ENCODE measurements at regions of chr3 and their contacts with region 1.

Region 1: DNA sequence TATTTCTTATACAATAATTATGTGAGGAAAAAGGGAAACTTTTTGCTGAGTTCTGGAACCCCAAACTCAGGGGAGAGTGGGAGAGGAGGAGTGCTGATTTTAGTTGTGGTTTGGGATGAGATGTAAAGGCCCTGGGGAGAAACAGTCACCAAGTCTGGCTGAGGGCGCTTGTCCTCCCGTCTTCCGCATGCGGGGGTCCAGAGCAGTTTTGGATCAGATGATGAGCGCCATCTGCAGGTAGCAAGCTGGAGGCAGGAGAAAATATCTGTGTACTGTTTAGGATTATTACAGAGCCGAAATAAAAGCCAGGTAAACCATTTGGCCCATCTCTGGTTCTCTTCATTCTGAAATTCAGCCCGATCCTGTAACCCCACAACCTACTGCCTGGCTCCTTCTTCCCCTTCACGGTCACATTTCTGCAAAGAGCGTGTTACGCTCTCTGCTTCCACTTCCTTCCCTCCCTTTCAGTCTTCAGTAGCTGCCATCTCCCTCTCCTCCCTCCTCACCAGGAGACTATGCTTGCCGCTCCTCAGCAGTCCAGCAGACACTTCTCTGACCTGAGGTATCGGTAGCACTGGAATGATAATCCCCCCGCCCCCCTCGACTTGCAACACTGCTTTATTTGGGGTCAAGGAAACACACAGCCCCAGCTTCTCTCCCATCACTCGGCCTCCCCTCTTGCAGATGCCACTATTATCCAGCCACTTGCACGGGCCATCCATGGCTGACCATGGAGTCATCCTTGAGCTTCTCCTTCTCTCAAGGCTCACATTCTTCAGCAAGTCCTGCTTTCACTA is 1.4 kb upstream of the PARP14 start:
- DNase-seq: peak; percentile 77
- H3K4me3 Mint-ChIP-seq: peak overlapping the region; percentile 95
- H3K27ac Mint-ChIP-seq: peak overlapping the region; percentile 97
- H3K4me1 Mint-ChIP-seq: peaks cover 54% of the 10 kb centered on the region
- H3K27me3 Mint-ChIP-seq: no peaks in the 10 kb centered on the region

Region 2: DNA sequence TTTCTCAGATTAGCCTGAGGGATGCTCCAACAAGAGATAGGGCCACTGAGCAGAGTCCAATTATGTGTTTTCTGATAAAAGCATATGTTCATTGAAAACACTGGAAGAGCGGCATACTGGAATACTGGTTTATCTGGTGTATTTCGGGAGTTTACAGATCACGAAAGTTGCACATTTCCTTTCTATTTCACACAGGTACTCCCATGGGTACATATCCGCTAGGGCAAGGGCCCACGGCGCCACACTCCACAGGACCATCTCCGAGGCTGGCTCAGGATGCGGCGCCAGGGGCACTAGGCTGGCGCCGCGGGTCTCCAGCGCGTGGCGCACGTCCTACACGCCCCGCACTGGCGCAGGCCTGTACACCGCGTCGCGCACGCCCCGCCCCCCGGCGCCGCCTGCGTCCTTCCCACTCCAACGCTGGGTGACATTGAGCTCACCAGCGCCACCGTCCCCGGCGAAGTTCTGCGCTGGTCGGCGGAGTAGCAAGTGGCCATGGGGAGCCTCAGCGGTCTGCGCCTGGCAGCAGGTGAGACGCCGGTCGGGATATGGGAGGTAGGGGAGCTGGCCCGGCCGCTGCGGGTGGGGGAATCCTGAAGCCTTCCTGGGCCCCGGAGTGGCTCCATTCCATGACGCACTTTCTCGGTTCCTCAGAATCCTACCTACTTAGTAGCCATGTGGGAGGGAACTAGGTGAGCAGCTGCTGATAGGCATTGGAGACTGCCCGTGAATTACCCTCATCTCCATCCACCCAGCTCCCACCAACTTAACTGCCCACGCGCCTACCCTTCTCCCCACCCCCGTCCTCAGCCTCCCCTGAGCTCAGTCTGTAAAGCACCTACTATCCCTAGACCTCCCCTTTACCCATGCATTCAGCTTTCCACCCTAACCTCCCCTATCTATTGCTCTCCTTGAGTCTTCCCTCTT is 295.2 kb before region 1 on chr3 and contains the start of gene FAM162A:
- intact Hi-C with region 1: loop called (anchors 2 kb)
- DNase-seq: peak; percentile 93
- H3K4me3 Mint-ChIP-seq: peak within 1 kb of the TSS; percentile 96
- H3K27ac Mint-ChIP-seq: peak within 1 kb of the TSS; percentile 90
- H3K4me1 Mint-ChIP-seq: peaks cover 81% of the 10 kb centered on the region
- H3K27me3 Mint-ChIP-seq: no peaks in the 10 kb centered on the region
- total RNA-seq, gene FAM162A: 63.7 and 70.0 TPM in 2 replicates

Region 3: DNA sequence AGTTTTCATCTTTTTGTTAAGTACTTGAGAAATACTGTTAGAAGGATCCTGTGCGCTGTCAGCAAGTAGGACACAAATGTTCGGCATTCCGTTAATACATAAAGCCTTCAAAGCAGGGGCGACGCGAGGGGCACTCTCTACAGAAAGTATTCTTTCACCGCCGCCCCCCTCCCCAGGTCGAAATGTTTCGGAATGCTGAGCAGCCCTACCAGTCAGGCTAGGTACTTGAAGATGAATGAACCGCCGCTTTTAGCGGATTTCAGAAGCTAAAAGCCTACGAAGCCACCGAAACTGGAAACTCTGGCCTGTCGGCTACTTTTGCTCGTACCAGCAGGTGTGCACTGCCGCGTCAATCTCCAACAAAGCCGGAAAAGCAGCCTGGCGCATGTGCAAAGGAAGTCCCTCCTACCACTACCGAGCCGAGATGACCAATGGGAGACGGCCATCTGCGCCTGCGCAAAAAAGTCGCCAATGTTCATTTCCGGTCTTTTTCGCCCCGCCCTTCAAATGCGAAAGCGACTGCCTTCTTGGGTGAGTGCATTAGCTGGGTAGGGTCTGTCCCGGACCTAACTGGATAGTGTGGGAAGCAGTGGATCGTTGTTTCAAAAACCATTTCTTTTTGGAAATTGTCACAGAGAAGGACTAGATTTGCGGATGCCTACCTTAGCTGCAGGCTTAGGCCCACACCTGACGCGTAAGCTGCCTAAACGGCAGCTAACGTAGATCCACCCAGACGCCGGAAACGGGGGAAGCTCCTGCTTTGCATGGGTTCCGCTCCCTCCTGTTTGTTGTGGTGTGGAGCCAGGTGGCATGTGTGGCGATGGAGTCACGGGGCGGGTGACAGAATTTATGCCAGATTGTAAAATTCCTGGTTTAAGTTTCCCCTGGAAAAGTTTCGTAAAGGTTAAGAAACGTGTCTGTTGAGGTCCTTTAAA is 263.3 kb before region 1 on chr3 and contains the start of gene WDR5B:
- intact Hi-C with region 1: loop called (anchors 1 kb)
- DNase-seq: peak; percentile 96
- H3K4me3 Mint-ChIP-seq: peak within 1 kb of the TSS; percentile 98
- H3K27ac Mint-ChIP-seq: peak within 1 kb of the TSS; percentile 99
- H3K4me1 Mint-ChIP-seq: peaks cover 48% of the 10 kb centered on the region
- H3K27me3 Mint-ChIP-seq: no peaks in the 10 kb centered on the region
- total RNA-seq, gene WDR5B: 4.3 and 5.6 TPM in 2 replicates

Region 4: GRCh38 chr3:122533931-122534334 is 145.3 kb before region 1 on chr3:
- intact Hi-C with region 1: loop called (anchors 1 kb)
- DNase-seq: peak; percentile 46
- H3K4me3 Mint-ChIP-seq: no peak overlapping the region
- H3K27ac Mint-ChIP-seq: peak overlapping the region; percentile 80
- H3K4me1 Mint-ChIP-seq: peaks cover 60% of the 10 kb centered on the region
- H3K27me3 Mint-ChIP-seq: no peaks in the 10 kb centered on the region

Region 5: DNA sequence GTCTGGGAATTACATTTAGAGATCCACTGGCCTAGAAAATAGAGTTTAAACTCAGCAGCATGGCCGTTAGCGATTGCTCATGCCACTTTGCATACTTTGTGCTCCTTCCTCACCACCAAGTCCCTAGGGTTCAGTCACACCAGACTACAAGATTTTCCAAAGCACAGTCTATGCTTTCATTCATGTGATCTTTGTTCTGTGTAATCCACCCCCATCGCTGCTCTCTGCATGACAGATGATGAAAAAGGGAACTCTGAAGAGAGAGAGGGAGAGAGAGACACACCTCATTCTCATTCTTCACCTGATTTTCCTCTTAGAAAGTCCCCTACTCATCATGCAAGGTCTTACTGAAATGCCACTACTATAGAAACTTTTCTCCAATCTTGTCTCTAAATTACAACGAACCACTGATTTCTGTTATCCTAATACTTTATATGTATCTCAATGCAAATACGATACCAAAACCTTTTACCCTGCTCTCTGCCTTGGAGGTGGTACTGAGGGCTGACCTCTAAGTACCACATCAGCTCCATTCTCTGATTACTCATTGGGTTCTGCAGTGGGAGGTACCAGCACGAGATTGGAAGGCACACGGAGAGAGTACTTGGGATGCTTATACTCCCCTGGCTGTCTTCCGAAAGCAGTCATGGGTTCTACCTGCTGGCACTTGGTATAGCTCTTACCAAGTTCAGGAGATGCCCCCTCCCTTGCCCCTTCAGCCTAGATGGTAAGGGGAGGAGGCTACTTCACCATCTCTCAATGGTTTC is 102.9 kb before region 1 on chr3:
- intact Hi-C with region 1: loop called (anchors 1 kb)
- DNase-seq: no peak
- H3K4me3 Mint-ChIP-seq: peak overlapping the region; percentile 25
- H3K27ac Mint-ChIP-seq: peak overlapping the region; percentile 77
- H3K4me1 Mint-ChIP-seq: peaks cover 59% of the 10 kb centered on the region
- H3K27me3 Mint-ChIP-seq: no peaks in the 10 kb centered on the region

Region 6: DNA sequence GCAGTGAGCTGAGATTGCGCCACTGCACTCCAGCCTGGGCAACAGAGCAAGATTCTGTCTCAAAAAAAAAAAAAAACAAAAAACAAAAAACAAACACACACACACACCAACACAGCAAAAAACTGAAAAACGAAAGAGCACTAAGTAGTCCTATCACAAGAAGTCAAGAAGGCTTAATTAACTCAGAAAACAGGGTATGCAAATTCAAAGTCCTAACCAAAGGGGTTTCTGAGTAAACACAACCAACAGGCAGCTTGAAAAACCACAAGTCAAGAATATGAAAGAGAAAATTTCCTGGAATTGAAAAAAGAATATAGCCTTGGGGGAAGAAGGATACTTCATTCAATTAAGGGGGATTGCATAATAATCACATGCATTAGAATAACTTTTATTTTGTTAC is 36.3 kb before region 1 on chr3:
- intact Hi-C with region 1: loop called (anchors 2 kb)
- DNase-seq: no peak
- H3K4me3 Mint-ChIP-seq: peak overlapping the region; percentile 28
- H3K27ac Mint-ChIP-seq: peak overlapping the region; percentile 74
- H3K4me1 Mint-ChIP-seq: peaks cover 41% of the 10 kb centered on the region
- H3K27me3 Mint-ChIP-seq: no peaks in the 10 kb centered on the region

Region 7: DNA sequence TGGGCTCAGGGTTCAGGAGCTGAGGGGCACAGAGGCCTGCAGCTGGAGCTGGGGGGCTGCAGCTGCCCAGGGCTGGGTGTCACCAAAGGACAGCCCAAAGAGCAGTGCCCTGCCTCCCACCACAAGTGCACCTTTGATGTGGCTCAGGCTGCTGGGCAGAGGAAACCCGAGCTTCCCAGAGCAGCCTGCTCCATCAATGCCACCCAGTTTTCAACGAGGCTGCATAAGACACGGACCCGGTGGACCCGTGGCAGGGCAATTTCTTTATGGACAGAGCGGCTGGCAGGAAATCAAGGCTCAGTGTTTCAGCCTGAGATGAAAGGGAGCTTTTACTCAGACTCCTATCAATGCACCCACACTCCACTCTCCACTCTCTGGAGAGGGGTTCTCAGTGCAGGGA is 329.6 kb after region 1 on chr3:
- intact Hi-C with region 1: no loop called
- DNase-seq: no peak
- H3K4me3 Mint-ChIP-seq: no peak overlapping the region
- H3K27ac Mint-ChIP-seq: no peak overlapping the region
- H3K4me1 Mint-ChIP-seq: no peaks in the 10 kb centered on the region
- H3K27me3 Mint-ChIP-seq: peaks cover 36% of the 10 kb centered on the region

Measured in activated T-helper 1 cell treated with anti-CD3 and anti-CD28 coated beads, Interleukin-12 subunit alpha, Interleukin-12 subunit beta, Interleukin-2, Interleukin-4 antibody, amounts not matched to agents 30 ng/mL and 10 ng/mL and 1 ng/mL, durations not matched to agents 14 hours and 24 hours and 36 hours (primary cell).